ENCODE measurements at regions of chr3 and their contacts with region 1.

Region 1: GRCh38 chr3:177197041-177197727 is at the start of gene TBL1XR1:
- DNase-seq: peak; percentile 88
- H3K4me3 ChIP-seq: peak within 1 kb of the TSS; percentile 55 to 98 (median 95)
- H3K27ac ChIP-seq: peak within 1 kb of the TSS; percentile 98
- H3K4me1 ChIP-seq: peaks cover 12% of the 10 kb centered on the region
- H3K27me3 ChIP-seq: no peaks in the 10 kb centered on the region
- CTCF ChIP-seq: no peak
- total RNA-seq, gene TBL1XR1: 157 to 187 TPM

Region 2: DNA sequence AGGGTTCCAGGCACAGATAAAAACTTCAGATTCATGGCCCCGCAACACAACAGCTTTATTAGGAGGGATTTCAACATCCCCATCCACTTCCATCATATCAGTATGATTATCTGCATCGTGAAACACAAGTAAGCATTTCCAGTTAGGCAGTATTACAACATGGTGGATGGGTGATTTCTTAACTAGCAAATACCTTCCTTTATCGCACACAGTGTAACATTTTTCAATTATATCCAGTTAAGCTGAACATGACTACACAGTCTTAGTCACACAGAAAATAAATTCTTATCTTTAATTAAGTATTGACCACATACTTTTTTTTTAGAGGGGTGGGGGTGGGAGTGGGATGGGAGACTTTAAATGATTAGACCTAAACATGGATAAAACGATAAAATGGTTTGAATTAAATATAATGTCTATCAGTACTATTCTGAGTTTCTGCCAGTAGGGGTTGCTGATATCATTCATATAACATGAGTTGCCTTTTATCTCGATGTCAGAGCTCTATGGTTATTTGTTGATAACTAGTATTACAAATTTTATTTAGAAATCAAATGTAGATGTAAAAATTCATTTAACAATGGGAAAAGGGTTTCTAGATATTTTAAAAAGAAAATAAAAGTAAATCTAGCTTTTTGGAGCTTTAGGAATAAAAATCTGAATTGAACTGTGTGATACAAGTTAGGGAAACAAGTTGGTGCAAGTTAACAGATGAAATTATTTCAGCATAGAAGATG is 146.5 kb before region 1 on chr3:
- CTCF ChIA-PET with region 1: no interaction called
- dilution Hi-C with region 1: no loop called
- in situ Hi-C with region 1: no loop called
- intact Hi-C with region 1: loop called (anchors 1 kb)
- DNase-seq: peak; percentile 24
- H3K4me3 ChIP-seq: no peak overlapping the region
- H3K27ac ChIP-seq: peak overlapping the region; percentile 22
- H3K4me1 ChIP-seq: peaks cover 8% of the 10 kb centered on the region
- H3K27me3 ChIP-seq: no peaks in the 10 kb centered on the region
- CTCF ChIP-seq: peak; percentile 40 to 54

Region 3: DNA sequence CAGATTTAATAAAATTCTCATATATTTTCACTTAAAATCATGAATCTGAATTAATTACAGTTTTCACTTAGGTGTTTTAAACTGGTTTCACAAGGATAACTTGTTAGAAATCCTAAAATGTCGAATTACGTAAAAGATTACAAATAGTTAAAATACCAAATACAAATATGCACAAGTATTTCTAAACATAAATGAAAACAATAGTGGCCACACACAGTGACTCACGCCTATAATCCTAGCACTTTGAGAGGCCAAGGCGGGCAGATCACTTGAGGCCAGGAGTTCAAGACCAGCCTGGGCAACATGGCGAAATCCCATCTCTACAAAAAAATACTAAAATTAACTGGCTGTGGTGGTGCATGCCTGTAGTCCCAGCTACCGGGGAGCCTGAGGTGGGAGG is 11.1 kb after region 1 on chr3:
- CTCF ChIA-PET with region 1: no interaction called
- dilution Hi-C with region 1: no loop called
- in situ Hi-C with region 1: no loop called
- intact Hi-C with region 1: no loop called
- DNase-seq: no peak
- H3K4me3 ChIP-seq: no peak overlapping the region
- H3K27ac ChIP-seq: no peak overlapping the region
- H3K4me1 ChIP-seq: no peaks in the 10 kb centered on the region
- H3K27me3 ChIP-seq: no peaks in the 10 kb centered on the region
- CTCF ChIP-seq: no peak

Region 4: DNA sequence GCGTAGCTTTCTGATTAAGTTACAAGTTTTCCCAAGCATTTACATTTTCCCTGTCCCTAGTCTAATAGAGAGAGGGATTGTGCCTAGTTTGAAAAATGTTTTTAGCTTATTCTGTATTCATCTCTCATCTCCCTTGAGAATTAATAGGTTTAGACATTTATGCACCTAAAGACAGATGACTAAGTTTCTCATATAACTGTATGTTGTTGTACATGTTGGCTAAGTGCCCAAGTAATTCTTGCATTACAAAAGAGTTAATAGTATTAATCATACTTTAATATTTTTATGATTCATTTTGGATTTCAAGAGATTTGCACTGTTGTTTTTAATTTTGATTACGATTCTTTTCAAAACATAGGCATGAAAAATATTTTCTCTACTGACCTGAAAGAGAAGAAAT is 109.1 kb after region 1 on chr3:
- CTCF ChIA-PET with region 1: no interaction called
- dilution Hi-C with region 1: no loop called
- in situ Hi-C with region 1: no loop called
- intact Hi-C with region 1: loop called (anchors 5 kb)
- DNase-seq: peak; percentile 82
- H3K4me3 ChIP-seq: no peak overlapping the region
- H3K27ac ChIP-seq: peak overlapping the region; percentile 44
- H3K4me1 ChIP-seq: peaks cover 10% of the 10 kb centered on the region
- H3K27me3 ChIP-seq: no peaks in the 10 kb centered on the region
- CTCF ChIP-seq: no peak

Region 5: GRCh38 chr3:177478170-177478860 is 281.1 kb after region 1 on chr3:
- CTCF ChIA-PET with region 1: no interaction called
- dilution Hi-C with region 1: no loop called
- in situ Hi-C with region 1: loop called in 1 of 2 experiments (anchors 25 kb)
- intact Hi-C with region 1: loop called (anchors 2 kb)
- DNase-seq: peak; percentile 99
- H3K4me3 ChIP-seq: no peak overlapping the region
- H3K27ac ChIP-seq: peak overlapping the region; percentile 91
- H3K4me1 ChIP-seq: peaks cover 10% of the 10 kb centered on the region
- H3K27me3 ChIP-seq: no peaks in the 10 kb centered on the region
- CTCF ChIP-seq: no peak

Region 6: GRCh38 chr3:177597311-177598096 is 400.3 kb after region 1 on chr3:
- CTCF ChIA-PET with region 1: no interaction called
- dilution Hi-C with region 1: no loop called
- in situ Hi-C with region 1: loop called in 1 of 2 experiments (anchors 25 kb)
- intact Hi-C with region 1: loop called (anchors 5 kb)
- DNase-seq: peak; percentile 91
- H3K4me3 ChIP-seq: no peak overlapping the region
- H3K27ac ChIP-seq: peak overlapping the region; percentile 89
- H3K4me1 ChIP-seq: peaks cover 77% of the 10 kb centered on the region
- H3K27me3 ChIP-seq: no peaks in the 10 kb centered on the region
- CTCF ChIP-seq: no peak

Region 7: GRCh38 chr3:178325330-178325729 is 1128.1 kb after region 1 on chr3:
- CTCF ChIA-PET with region 1: no interaction called
- dilution Hi-C with region 1: no loop called
- in situ Hi-C with region 1: no loop called
- intact Hi-C with region 1: loop called (anchors 10 kb)
- DNase-seq: no peak
- H3K4me3 ChIP-seq: no peak overlapping the region
- H3K27ac ChIP-seq: no peak overlapping the region
- H3K4me1 ChIP-seq: no peaks in the 10 kb centered on the region
- H3K27me3 ChIP-seq: no peaks in the 10 kb centered on the region
- CTCF ChIP-seq: peak; percentile 49 to 56